Tibial artery (tissue), 4 donors: ENCODE measurements at regions of chr21 and their contacts with region 1.

Region 1: DNA sequence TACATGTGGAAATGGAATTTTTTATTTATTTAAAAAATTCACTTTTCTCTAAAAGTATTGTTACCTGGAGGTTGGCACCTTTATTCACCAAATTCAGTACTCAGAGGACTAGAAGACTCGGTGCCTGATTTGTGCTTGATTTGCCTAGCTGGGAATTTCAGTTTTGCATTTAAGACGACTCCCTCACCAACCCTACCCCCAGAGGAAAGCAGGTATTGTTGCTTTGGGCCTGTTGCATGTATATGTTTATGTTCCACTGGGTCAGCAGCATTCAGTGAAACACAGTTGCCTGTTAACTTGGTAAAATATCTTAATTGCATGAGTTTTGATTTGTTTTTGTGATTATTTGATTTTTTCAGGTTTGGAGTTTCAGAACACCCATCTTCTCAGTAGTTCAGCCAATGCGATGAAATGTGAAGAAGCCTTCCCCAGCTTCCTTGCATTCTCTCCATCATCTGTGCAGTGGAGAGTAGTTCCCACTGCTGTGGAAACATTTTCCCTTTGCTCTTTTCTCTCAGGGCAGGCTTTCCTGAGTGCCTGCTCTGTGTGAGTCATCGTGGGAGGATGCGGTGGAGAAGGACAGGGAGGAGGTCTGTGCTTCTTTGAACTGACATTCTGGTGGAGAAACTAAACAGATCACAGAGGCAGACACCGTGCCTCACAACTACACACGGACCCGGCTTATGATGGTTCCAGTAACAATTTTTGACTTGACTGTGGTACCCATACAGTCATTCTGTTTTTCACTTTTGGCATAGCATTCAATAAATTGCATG is 6.4 kb downstream of the ADARB1 start:
- DNase-seq: no peak
- H3K4me3 ChIP-seq: no peak overlapping the region
- H3K27ac ChIP-seq: peak overlapping the region; percentile 95
- H3K4me1 ChIP-seq: peaks cover 0 to 95% (median 75%) of the 10 kb centered on the region in 4 donors
- H3K27me3 ChIP-seq: no peaks in the 10 kb centered on the region
- CTCF ChIP-seq: no peak

Region 2: GRCh38 chr21:45129189-45129923 is 48.5 kb after region 1 on chr21:
- intact Hi-C with region 1: loop called (anchors 5 kb)
- DNase-seq: peak in 1 of 2 donors; percentile 78
- H3K4me3 ChIP-seq: no peak overlapping the region
- H3K27ac ChIP-seq: peak overlapping the region; percentile 77 to 80
- H3K4me1 ChIP-seq: peaks cover 0 to 96% (median 76%) of the 10 kb centered on the region in 4 donors
- H3K27me3 ChIP-seq: no peaks in the 10 kb centered on the region
- CTCF ChIP-seq: no peak